ENCODE measurements at regions of chr15 and their contacts with region 1.

Region 1: GRCh38 chr15:60585743-60586708 is 107.1 kb upstream of the ICE2 start:
- DNase-seq: peak; percentile 57 to 76
- H3K4me3 ChIP-seq: no peak overlapping the region
- H3K4me3 Mint-ChIP-seq: peak overlapping the region; percentile 5
- H3K27ac Mint-ChIP-seq: no peak overlapping the region
- H3K4me1 ChIP-seq: peaks cover 35% of the 10 kb centered on the region
- H3K4me1 Mint-ChIP-seq: peaks cover 30% of the 10 kb centered on the region
- H3K27me3 ChIP-seq: no peaks in the 10 kb centered on the region
- H3K27me3 Mint-ChIP-seq: no peaks in the 10 kb centered on the region
- CTCF ChIP-seq: peak; percentile 73 to 78

Region 2: GRCh38 chr15:60673918-60674558 is 88.0 kb after region 1 on chr15:
- CTCF ChIA-PET with region 1: no interaction called
- POLR2A ChIA-PET with region 1: no interaction called
- intact Hi-C with region 1: no loop called
- DNase-seq: no peak
- H3K4me3 ChIP-seq: no peak overlapping the region
- H3K4me3 Mint-ChIP-seq: no peak overlapping the region
- H3K27ac Mint-ChIP-seq: no peak overlapping the region
- H3K4me1 ChIP-seq: no peaks in the 10 kb centered on the region
- H3K4me1 Mint-ChIP-seq: no peaks in the 10 kb centered on the region
- H3K27me3 ChIP-seq: no peaks in the 10 kb centered on the region
- H3K27me3 Mint-ChIP-seq: peaks cover 16% of the 10 kb centered on the region
- CTCF ChIP-seq: no peak

Region 3: DNA sequence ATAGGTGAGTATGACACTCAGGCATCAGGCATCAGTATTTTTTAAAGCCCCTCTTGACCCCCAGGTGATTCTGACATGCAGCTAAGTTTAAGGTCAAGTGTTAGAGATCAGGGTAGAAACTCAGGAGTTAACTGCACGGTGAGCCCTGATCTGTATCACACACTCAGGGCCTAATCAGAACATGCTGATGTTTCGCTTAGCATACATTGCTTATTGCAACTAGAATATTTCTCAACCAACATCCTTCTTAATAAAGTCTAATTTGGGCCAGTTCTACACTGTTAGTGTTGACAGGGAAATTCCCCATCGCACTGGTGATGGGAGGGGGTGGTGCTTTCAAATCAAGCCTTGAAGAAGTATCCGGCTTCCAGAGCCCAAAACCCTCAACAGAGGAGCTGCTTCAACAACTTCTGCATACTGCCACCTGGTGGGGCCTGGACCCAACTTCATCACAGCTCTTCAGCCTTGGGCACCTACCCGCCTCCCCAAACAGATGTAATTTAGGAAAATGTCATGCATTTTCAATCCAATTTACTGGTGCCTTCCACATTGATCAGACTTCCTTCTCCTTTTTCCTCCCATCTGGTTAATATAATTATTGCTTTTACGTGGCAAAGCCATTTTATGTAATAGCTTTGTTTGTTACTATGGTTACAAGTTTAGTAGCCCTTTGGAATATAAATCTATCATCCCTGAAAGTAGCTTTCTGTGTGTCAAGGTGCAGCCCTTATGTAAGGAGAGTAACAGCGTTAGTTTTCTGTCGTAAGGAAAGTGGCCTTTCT is 330.8 kb after region 1 on chr15:
- CTCF ChIA-PET with region 1: interaction called, 14 read pairs
- POLR2A ChIA-PET with region 1: no interaction called
- intact Hi-C with region 1: loop called (anchors 2 kb)
- DNase-seq: peak; percentile 69 to 76
- H3K4me3 ChIP-seq: no peak overlapping the region
- H3K4me3 Mint-ChIP-seq: no peak overlapping the region
- H3K27ac Mint-ChIP-seq: no peak overlapping the region
- H3K4me1 ChIP-seq: peaks cover 31% of the 10 kb centered on the region
- H3K4me1 Mint-ChIP-seq: peaks cover 21% of the 10 kb centered on the region
- H3K27me3 ChIP-seq: no peaks in the 10 kb centered on the region
- H3K27me3 Mint-ChIP-seq: no peaks in the 10 kb centered on the region
- CTCF ChIP-seq: peak; percentile 55 to 66

Region 4: DNA sequence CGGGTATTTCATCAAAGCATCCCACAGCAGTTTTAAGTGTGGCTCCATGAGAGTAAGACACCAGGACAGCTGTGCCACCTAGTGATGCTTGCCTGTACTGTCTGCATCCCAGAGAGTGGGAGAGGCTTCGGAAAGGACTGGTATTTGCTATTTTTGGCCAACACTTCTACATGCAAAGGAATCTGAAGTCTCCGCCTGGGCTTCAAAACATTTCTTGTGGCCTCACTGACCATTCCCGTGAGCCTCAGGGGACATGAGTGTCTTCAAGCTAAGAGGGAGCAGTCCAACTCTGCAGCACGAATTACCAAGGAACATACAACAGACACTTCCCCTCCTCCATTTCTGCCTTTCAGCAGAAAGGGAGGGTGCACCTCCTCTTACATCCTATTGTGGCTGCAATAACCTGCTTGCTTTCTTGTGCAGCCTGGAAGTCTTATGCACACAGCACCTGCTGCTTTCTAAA is 465.6 kb after region 1 on chr15:
- CTCF ChIA-PET with region 1: no interaction called
- POLR2A ChIA-PET with region 1: no interaction called
- intact Hi-C with region 1: loop called (anchors 2 kb)
- DNase-seq: peak in 1 of 2 experiments; percentile 53
- H3K4me3 ChIP-seq: no peak overlapping the region
- H3K4me3 Mint-ChIP-seq: no peak overlapping the region
- H3K27ac Mint-ChIP-seq: no peak overlapping the region
- H3K4me1 ChIP-seq: no peaks in the 10 kb centered on the region
- H3K4me1 Mint-ChIP-seq: peaks cover 6% of the 10 kb centered on the region
- H3K27me3 ChIP-seq: no peaks in the 10 kb centered on the region
- H3K27me3 Mint-ChIP-seq: no peaks in the 10 kb centered on the region
- CTCF ChIP-seq: peak; percentile 65 to 67

Region 5: GRCh38 chr15:61184431-61184830 is 598.4 kb after region 1 on chr15:
- CTCF ChIA-PET with region 1: no interaction called
- POLR2A ChIA-PET with region 1: no interaction called
- intact Hi-C with region 1: loop called (anchors 5 kb)
- DNase-seq: peak in 1 of 2 experiments; percentile 17
- H3K4me3 ChIP-seq: no peak overlapping the region
- H3K4me3 Mint-ChIP-seq: no peak overlapping the region
- H3K27ac Mint-ChIP-seq: no peak overlapping the region
- H3K4me1 ChIP-seq: no peaks in the 10 kb centered on the region
- H3K4me1 Mint-ChIP-seq: no peaks in the 10 kb centered on the region
- H3K27me3 ChIP-seq: no peaks in the 10 kb centered on the region
- H3K27me3 Mint-ChIP-seq: peaks cover 25% of the 10 kb centered on the region
- CTCF ChIP-seq: peak in 1 of 2 experiments; percentile 38